ENCODE measurements at regions of chr18 and their contacts with region 1.

Region 1: GRCh38 chr18:25233528-25234321 is 118.2 kb downstream of the ZNF521 start:
- DNase-seq: peak; percentile 33
- H3K4me3 ChIP-seq: peak overlapping the region; percentile 12; the same call in 1 of the 2 replicates
- H3K27me3 ChIP-seq: no peaks in the 10 kb centered on the region
- CTCF ChIP-seq: no peak

Region 2: DNA sequence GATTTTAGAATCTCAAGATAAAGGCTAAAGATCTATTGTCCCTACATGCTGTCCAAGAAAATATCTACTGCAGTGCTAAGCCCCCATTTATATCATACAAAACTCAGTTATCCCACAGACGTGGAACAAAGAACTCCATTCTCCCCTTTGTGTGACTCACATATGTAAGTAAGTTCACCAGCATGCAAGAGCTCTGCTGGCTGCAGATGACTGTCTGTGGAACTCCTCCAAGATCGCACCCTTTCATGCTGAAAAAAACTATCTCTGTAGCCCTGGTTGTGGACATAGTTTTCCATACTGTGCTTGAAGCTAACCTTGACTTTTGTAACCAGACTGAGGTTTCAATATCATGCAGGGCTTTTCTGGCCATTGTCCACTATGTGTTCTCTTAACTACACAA is 88.9 kb before region 1 on chr18:
- CTCF ChIA-PET with region 1: no interaction called
- POLR2A ChIA-PET with region 1: no interaction called
- DNase-seq: peak; percentile 31
- H3K4me3 ChIP-seq: no peak overlapping the region
- H3K27me3 ChIP-seq: no peaks in the 10 kb centered on the region
- CTCF ChIP-seq: no peak

Region 3: DNA sequence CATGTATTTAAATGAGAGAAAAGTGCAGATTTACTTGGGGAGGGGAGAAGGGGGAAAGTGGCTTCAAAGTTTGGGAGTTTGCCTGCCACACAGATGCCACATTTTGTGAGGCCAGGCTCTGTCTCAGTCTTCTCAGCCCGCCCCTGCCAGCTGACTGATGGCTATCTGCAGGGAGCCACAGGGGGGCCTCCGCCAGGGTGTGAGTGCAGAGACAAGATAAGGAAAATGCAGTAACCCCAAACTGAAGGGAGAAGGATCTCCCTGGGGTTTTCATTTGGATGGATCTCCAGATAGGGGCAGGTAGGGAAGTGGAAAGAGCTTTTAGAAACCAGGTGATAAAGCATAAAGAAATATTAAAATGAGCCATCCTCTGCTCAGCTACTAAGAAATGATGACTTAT is 10.5 kb before region 1 on chr18:
- CTCF ChIA-PET with region 1: interaction called, 4 read pairs
- POLR2A ChIA-PET with region 1: interaction called, 20 read pairs
- DNase-seq: no peak
- H3K4me3 ChIP-seq: no peak overlapping the region
- H3K27me3 ChIP-seq: no peaks in the 10 kb centered on the region
- CTCF ChIP-seq: no peak

Region 4: DNA sequence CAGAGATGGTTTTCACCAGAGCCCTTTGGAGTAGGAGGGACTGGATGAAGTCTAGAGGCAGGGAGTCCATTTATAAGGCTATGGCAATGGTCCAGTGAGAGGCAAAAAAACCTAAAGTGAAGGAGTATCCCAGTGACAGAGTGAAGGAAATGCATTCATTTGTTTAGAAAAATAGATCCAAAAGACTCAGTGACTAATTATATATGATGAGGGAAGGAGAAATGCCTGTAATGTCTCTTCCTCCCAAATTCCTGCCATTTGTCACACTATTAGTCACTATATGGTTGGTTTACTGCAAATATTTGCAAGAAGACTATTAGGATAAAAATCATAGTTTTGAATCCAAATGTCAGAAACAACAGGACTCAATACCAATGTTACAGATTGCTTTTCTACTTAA is 14.0 kb after region 1 on chr18:
- CTCF ChIA-PET with region 1: no interaction called
- POLR2A ChIA-PET with region 1: no interaction called
- DNase-seq: no peak
- H3K4me3 ChIP-seq: no peak overlapping the region
- H3K27me3 ChIP-seq: no peaks in the 10 kb centered on the region
- CTCF ChIP-seq: no peak

Measured in BJ (cell line).